A673 (cell line): ENCODE measurements at regions of chr1 and their contacts with region 1.

Region 1: GRCh38 chr1:84620720-84621313 is 46.6 kb upstream of the CTBS start:
- DNase-seq: peak; percentile 89
- H3K4me3 ChIP-seq: peak overlapping the region; percentile 64
- H3K27ac ChIP-seq: peak overlapping the region; percentile 65
- H3K4me1 ChIP-seq: peaks cover 15% of the 10 kb centered on the region
- H3K27me3 ChIP-seq: no peaks in the 10 kb centered on the region
- CTCF ChIP-seq: peak; percentile 97

Region 2: GRCh38 chr1:82775402-82776000 is 1845.3 kb before region 1 on chr1:
- CTCF ChIA-PET with region 1: no interaction called
- POLR2A ChIA-PET with region 1: no interaction called
- intact Hi-C with region 1: no loop called
- DNase-seq: peak; percentile 83
- H3K4me3 ChIP-seq: no peak overlapping the region
- H3K27ac ChIP-seq: no peak overlapping the region
- H3K4me1 ChIP-seq: no peaks in the 10 kb centered on the region
- H3K27me3 ChIP-seq: peaks cover 24% of the 10 kb centered on the region
- CTCF ChIP-seq: peak; percentile 91

Region 3: GRCh38 chr1:83905315-83905907 is 715.4 kb before region 1 on chr1:
- CTCF ChIA-PET with region 1: no interaction called
- POLR2A ChIA-PET with region 1: no interaction called
- intact Hi-C with region 1: loop called (anchors 10 kb)
- DNase-seq: peak; percentile 50
- H3K4me3 ChIP-seq: no peak overlapping the region
- H3K27ac ChIP-seq: no peak overlapping the region
- H3K4me1 ChIP-seq: no peaks in the 10 kb centered on the region
- H3K27me3 ChIP-seq: no peaks in the 10 kb centered on the region
- CTCF ChIP-seq: peak; percentile 67

Region 4: DNA sequence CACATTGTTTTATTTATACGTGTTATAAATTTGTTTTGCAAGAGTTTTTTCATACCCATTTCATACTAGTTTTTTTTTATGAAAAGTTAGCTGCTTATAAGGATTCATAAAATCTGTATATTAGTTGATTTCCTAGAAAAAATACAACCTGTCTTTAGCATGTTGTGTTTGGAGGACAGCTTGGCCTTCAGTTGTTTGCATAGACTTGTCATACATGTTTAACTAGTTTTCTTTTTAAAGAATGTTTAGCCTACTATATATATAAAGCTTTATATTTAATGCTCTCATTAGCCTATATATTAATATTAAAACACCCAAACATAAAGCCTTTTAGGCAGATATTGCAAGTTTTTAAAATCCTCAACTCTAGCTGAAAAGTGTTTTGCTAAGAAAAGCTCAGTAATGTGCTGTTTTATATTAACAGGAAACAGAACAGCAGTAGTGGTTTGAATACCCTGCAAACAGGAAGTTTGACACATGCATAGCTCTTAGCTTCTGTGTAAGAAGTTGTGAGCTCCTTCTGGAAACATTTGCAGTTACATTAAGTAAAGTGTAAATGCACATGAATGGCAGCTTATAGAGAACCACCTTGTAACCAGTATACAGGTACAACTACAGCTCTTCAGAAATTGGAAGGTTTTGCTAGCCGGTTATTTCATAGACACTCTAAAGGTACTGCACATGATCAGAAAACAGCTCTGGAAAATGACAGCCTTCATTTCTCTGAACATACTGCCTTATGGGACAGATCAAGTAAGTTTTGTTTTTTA is 476.8 kb before region 1 on chr1 and contains the start of gene PRKACB:
- CTCF ChIA-PET with region 1: no interaction called
- POLR2A ChIA-PET with region 1: no interaction called
- intact Hi-C with region 1: loop called (anchors 5 kb)
- DNase-seq: peak; percentile 72
- H3K4me3 ChIP-seq: peak within 1 kb of the TSS; percentile 3
- H3K27ac ChIP-seq: peak within 1 kb of the TSS; percentile 56
- H3K4me1 ChIP-seq: peaks cover 17% of the 10 kb centered on the region
- H3K27me3 ChIP-seq: no peaks in the 10 kb centered on the region
- CTCF ChIP-seq: no peak
- total RNA-seq, gene PRKACB: 33.6 and 39.6 TPM in 2 replicates

Region 5: DNA sequence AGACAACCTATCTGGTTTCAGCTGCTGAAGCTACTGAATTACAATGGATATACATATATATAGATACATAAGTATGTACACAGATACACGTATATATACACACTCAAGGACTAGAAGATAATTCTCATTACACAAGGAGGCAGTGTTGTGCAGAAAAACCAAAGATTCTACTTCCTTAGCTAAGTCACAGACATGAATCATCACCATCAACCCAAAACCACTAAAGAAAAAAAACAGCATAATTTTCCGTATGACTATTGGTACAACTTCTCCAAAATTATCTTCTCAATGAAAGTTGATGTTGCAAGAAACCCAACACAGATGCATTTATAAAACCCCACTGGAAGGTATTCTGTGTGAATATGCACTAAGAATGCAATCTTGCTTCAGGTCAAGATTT is 178.6 kb before region 1 on chr1:
- CTCF ChIA-PET with region 1: interaction called, 5 read pairs
- POLR2A ChIA-PET with region 1: no interaction called
- intact Hi-C with region 1: loop called (anchors 1 kb)
- DNase-seq: peak; percentile 77
- H3K4me3 ChIP-seq: no peak overlapping the region
- H3K27ac ChIP-seq: no peak overlapping the region
- H3K4me1 ChIP-seq: no peaks in the 10 kb centered on the region
- H3K27me3 ChIP-seq: no peaks in the 10 kb centered on the region
- CTCF ChIP-seq: peak; percentile 63

Region 6: DNA sequence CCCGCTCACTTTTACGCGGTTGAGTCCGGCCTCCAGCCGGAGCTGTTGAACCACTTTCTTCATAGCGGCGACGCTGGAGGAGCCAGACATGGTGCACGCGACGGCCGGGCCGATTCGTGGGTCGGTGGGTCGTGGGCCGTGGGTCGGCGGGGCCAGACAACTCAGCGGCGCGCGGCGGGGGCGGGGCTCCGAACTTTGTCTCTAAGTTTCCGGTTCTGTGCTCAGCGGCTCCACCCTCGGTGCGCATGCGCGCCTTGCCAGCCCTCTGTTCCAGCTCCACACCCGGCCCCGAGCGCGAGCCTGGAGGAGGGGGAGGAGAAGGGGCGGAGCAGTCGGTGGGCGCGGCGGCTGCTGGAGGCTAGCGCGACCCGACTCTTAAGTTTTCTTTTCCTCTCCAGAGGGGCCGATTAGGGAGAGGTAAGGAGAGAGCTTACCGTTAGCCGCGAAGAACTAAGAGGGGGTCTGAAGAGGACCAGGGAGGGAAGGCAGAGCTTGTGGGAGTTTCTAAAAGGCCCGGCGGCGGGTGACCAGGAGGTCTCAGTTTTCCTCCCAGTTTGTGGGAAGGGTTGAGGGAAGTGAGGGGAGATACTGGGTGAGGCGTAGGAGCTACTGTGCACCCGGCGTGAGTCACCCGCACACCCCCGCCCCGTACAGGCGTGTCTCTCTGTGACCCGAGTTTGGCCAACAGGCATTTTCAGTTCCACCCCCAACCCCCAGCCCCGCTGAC is 114.7 kb before region 1 on chr1 and contains the starts of genes GNG5 and SPATA1:
- CTCF ChIA-PET with region 1: no interaction called
- POLR2A ChIA-PET with region 1: no interaction called
- intact Hi-C with region 1: loop called (anchors 2 kb)
- DNase-seq: peak; percentile 98
- H3K4me3 ChIP-seq: peak within 1 kb of the TSS; percentile 80
- H3K27ac ChIP-seq: peak within 1 kb of the TSS; percentile 92
- H3K4me1 ChIP-seq: peaks cover 18% of the 10 kb centered on the region
- H3K27me3 ChIP-seq: no peaks in the 10 kb centered on the region
- CTCF ChIP-seq: no peak
- total RNA-seq, gene GNG5: 114 and 119 TPM in 2 replicates
- total RNA-seq, gene SPATA1: 0.95 and 1.3 TPM in 2 replicates

Region 7: DNA sequence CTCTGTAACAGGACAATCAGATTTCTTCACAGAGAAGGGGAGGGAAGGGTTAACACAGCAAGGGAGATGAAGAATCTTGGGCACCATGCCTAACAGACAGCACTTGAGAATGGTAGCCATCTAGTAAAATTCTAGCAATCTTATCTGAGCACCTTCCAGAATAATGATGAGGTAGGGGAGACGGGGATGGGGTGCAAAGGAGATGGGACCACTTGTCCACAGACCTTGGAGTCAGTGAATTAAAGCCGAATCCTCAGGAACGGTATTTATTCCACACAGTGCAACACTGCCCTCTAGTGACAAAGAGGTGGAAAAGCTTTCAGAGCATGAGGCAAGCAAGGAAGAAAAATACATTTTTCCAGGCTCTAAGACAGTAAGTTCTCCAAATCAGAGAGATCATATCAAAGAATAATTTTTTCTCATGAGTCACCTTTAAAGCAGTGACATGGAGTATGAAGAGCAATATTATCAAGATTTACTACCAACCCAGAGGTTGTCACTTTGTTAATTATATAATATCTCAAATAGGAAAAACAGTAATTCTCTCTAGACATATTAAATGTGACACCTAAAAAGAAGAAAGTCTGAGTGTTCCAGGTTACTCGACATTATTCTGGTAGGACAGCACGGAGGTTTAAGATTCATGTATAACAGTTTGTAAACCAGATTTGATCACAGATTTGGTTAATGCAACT is 315.4 kb after region 1 on chr1:
- CTCF ChIA-PET with region 1: no interaction called
- POLR2A ChIA-PET with region 1: no interaction called
- intact Hi-C with region 1: loop called (anchors 10 kb)
- DNase-seq: peak; percentile 77
- H3K4me3 ChIP-seq: no peak overlapping the region
- H3K27ac ChIP-seq: no peak overlapping the region
- H3K4me1 ChIP-seq: no peaks in the 10 kb centered on the region
- H3K27me3 ChIP-seq: no peaks in the 10 kb centered on the region
- CTCF ChIP-seq: peak; percentile 92

Region 8: GRCh38 chr1:85628791-85629531 is 1008.1 kb after region 1 on chr1:
- CTCF ChIA-PET with region 1: no interaction called
- POLR2A ChIA-PET with region 1: no interaction called
- intact Hi-C with region 1: no loop called
- DNase-seq: peak; percentile 83
- H3K4me3 ChIP-seq: no peak overlapping the region
- H3K27ac ChIP-seq: peak overlapping the region; percentile 87
- H3K4me1 ChIP-seq: peaks cover 21% of the 10 kb centered on the region
- H3K27me3 ChIP-seq: no peaks in the 10 kb centered on the region
- CTCF ChIP-seq: no peak